A549 (cell line): ENCODE measurements at regions of chr9 and their contacts with region 1.

Region 1: DNA sequence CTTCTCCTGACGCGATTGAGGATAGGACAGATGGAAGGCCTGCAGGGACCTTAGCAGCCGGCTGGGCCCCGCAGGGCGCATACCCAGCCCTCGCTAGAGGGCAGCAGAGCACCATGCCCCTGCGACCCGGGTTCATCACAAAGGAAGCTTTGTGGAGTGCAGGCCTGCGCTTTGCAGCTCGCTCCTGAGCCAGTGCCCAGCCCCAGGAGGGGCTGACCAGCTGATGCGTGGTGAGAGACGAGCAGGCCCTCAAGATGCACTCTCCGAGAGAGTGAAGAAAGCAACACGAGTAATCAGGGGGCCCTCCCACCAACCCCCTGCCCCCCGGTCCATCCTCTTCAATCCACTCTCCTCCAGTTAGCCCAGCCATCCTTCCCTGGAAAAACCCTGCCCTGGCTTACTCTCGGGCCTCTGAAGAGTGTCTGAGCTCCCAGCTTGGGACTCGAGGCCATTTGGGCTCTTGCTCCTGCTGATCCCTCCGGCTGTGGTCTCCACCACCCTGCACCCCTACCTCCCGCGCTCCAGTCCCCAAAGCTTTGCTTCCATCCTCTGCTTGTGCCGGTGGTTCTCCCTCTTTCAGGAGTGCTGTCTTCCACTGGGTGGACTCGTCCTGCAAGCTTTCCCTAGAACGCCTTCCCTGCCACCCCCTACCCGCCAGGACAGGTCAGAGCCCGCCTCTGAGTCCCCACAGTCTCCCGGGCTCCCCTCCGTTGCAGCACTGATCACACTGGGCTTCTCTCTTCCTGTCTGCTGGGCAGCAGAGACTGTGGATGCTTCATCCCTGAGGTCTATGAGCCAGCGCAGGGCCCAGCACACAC is 9.1 kb upstream of the KIF12 start:
- DNase-seq: peak; percentile 83 to 91
- ATAC-seq: peak; percentile 97 to 99
- H3K4me3 ChIP-seq: no peak overlapping the region
- H3K27ac ChIP-seq: peak overlapping the region; percentile 39 to 73; a peak in 5 of 6 replicates
- H3K4me1 ChIP-seq: peaks cover 38% of the 10 kb centered on the region
- CTCF ChIP-seq: peak; percentile 92
- EP300 ChIP-seq: no peak
- POLR2A ChIP-seq: no peak
- RAD21 ChIP-seq: peak; percentile 97

Region 2: DNA sequence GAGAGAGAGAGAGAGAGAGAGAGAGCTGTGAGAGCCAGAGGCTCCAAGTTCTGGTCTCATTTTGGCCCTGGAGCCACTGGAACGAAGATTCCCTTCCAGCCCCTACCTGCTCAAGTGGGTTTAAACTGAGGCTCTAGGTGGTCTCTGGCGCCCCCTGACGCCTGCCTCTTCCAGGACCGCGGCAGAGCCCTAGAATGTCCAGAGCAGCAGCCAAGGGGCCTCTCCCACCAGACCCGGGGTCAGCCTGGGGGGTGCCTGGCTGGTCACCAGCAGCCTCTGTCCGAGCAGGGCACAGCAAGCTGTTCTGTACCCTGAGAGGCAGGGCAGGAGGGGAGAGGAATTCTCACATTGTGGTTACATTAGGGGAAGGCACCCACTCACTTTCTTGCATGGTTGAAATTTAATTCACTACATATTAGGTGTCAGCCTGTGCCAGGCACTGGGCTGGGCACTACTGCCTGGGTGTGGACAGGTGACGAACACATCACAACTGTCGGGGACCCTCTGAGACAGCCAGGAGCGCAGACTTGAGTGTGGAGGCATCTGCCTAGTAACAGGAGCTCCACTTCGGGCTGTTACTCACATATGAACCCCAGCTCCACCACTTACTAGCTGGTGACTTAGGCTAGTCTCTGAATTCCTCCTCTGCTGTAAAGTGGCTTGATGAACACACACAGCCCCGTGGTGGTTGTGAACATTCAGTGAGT is 74.7 kb before region 1 on chr9:
- CTCF ChIA-PET with region 1: no interaction called
- POLR2A ChIA-PET with region 1: no interaction called
- DNase-seq: peak in 1 of 2 experiments; percentile 13
- ATAC-seq: peak in 1 of 2 experiments; percentile 73; a peak in 3 of 6 replicates
- H3K4me3 ChIP-seq: no peak overlapping the region
- H3K27ac ChIP-seq: no peak overlapping the region
- H3K4me1 ChIP-seq: no peaks in the 10 kb centered on the region
- CTCF ChIP-seq: peak; percentile 33
- EP300 ChIP-seq: no peak
- POLR2A ChIP-seq: no peak
- RAD21 ChIP-seq: peak; percentile 44 to 64; a peak in 3 of 5 replicates

Region 3: DNA sequence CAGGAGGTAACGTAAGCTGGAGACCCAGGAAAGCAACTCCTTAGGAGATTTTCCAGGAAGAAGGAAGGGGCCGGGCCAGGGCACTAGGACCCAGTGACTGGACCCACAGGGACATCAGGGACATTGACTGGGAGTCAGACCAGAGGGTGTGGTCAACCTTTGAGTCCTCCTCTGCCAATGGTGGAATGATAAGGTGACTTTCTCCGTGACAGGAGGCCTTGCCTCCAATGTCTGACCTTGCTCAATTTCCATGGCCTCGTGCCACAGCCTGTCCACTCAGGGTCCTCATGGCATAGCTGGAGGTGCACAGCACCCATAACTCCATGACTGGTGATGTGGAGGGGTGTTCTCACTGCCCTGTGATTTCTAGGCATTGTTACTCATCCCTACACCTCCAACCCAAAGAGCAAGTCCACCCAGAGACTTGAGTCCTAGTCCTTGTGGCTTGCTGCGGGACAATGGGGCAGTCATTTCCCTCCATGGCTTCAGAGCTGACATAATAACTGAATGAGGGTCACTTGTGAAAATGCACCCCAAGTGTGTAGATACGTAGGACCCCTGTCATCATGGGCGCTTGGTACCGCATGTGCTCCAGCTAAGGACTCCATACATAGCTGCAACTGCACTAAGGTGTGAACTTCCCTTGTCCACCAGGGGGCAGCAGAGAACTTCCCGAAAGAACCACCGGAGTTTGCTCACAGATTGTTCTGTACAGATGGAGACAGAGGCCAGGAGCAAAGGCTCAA is 26.0 kb before region 1 on chr9:
- CTCF ChIA-PET with region 1: interaction called, 145 read pairs
- POLR2A ChIA-PET with region 1: interaction called, 3 read pairs
- DNase-seq: peak; percentile 92 to 94
- ATAC-seq: peak; percentile 74 to 83
- H3K4me3 ChIP-seq: no peak overlapping the region
- H3K27ac ChIP-seq: peak overlapping the region; percentile 93 to 94
- H3K4me1 ChIP-seq: peaks cover 75% of the 10 kb centered on the region
- CTCF ChIP-seq: peak; percentile 92
- EP300 ChIP-seq: no peak
- POLR2A ChIP-seq: no peak
- RAD21 ChIP-seq: peak; percentile 93 to 95

Region 4: DNA sequence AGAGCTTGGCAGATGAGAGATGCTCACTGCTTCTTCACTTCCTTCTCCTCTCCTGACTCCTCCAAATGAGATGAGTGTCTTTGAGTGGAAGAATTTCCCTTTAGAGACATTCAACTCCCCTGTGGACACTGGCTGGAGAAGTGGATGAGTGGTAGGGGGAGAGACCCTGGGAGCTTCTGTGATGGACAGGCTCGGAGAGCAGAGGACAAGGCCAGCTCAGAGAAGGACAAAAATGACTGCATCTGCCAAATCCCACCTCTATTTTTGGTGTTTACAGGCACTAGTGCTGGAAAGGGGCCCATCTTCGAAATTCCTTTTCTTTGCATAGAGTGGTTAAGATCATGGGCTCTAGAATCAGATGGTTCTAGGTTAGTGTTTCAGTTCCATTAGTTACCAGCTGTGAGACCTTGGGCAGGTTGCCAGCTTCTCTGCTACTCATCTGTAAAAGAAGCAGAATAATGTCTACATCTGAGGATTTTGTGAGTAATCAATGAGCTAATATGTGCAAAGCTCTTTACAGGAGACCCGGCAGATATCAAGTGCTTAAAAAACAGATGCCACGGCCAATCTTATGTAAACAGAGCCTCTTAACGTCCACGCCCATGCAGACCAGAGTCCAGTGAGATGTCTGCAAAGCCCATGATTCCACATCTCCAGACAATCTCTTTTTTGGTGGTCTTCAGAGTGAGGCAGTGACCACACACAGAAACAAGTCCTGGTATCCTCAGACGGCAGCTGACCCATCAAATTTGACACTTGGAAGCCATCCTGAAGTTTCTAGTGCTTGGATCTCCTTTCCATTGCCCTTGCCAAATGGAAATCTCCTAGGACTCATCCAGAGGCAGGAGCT is 33.6 kb after region 1 on chr9:
- CTCF ChIA-PET with region 1: interaction called, 96 read pairs
- POLR2A ChIA-PET with region 1: no interaction called
- DNase-seq: no peak
- ATAC-seq: no peak; a peak in 1 of 6 replicates
- H3K4me3 ChIP-seq: no peak overlapping the region
- H3K27ac ChIP-seq: no peak overlapping the region
- H3K4me1 ChIP-seq: 0 out of 3 replicates have a peak, but pooled peaks cover 7% of the 10 kb centered on the region
- CTCF ChIP-seq: no peak
- EP300 ChIP-seq: no peak
- POLR2A ChIP-seq: no peak
- RAD21 ChIP-seq: no peak

Region 5: DNA sequence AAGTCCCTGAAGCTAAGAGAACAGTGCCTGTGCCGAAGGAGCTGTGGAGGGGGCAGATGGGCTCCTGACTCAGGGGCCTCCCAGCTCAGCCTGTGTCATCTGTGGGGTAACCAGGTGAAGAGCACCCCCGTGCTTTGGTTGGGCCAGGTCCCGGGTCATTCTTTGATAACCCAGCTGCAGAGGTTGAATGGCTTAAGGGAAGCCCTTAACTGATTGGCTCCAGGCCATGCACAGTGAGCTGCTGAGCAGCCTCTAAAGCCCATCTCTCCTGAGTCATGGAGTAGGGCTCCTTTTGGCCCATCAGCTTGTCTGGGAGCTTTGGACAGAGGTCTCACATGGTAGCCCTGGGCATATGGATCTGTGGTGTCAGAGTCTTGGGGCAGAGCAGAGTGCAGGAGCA is 75.8 kb after region 1 on chr9:
- CTCF ChIA-PET with region 1: interaction called, 11 read pairs
- POLR2A ChIA-PET with region 1: no interaction called
- DNase-seq: no peak
- ATAC-seq: peak; percentile 33 to 38; a peak in 3 of 6 replicates
- H3K4me3 ChIP-seq: no peak overlapping the region
- H3K27ac ChIP-seq: no peak overlapping the region
- H3K4me1 ChIP-seq: no peaks in the 10 kb centered on the region
- CTCF ChIP-seq: no peak
- EP300 ChIP-seq: no peak
- POLR2A ChIP-seq: no peak
- RAD21 ChIP-seq: no peak

Region 6: DNA sequence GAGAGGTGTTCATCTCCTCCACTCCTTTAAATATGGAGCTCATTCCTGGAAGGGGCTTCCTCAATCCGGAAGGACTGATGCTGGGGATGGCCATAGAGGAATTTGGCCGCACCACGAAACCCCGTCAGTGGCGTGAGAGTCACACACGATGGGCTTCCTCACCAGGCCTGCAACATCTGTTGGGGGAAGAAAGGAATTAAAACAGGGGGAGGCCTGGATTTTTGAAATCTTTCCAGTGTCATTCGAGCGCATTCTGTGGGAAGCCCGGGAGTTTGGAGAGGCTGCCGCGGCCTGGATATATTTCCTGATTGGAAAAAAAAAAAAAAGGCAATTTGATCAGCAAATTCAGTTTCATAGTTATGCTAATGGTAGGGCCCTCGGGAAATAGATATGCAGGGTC is 138.3 kb after region 1 on chr9:
- CTCF ChIA-PET with region 1: interaction called, 14 read pairs
- POLR2A ChIA-PET with region 1: no interaction called
- DNase-seq: no peak
- ATAC-seq: no peak
- H3K4me3 ChIP-seq: no peak overlapping the region
- H3K27ac ChIP-seq: no peak overlapping the region
- H3K4me1 ChIP-seq: no peaks in the 10 kb centered on the region
- CTCF ChIP-seq: no peak
- EP300 ChIP-seq: no peak
- POLR2A ChIP-seq: no peak
- RAD21 ChIP-seq: no peak

Region 7: GRCh38 chr9:114282926-114283325 is 174.7 kb after region 1 on chr9:
- CTCF ChIA-PET with region 1: interaction called, 90 read pairs
- POLR2A ChIA-PET with region 1: no interaction called
- DNase-seq: peak in 1 of 2 experiments; percentile 46
- ATAC-seq: peak; percentile 25 to 31; a peak in 4 of 6 replicates
- H3K4me3 ChIP-seq: no peak overlapping the region
- H3K27ac ChIP-seq: peak overlapping the region; percentile 53 to 88; a peak in 4 of 6 replicates
- H3K4me1 ChIP-seq: peaks cover 69% of the 10 kb centered on the region
- CTCF ChIP-seq: no peak
- EP300 ChIP-seq: no peak
- POLR2A ChIP-seq: no peak
- RAD21 ChIP-seq: no peak